Transverse colon (tissue), 4 donors: ENCODE measurements at regions of chr16 and their contacts with region 1.

Region 1: DNA sequence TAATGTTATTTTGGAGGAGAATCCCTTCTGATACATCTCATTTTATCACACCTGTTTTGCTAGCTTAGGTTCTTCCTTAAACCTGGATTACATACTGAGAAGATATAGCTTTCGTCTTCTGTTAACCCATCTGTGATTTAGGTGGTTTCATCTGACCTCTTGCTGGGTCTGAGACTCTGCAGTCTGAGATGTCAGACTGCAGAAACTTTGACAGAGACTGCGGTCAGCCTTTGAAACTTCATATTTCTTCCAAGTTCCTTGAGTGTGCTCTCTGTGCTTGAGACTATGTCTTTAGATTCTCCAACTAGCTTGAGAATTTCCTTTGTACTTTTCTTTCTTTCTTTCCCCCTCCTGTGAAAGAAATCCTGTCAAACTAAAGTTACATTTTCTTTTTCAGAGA is 196.4 kb upstream of the MPHOSPH6 start:
- DNase-seq: no peak
- H3K4me3 ChIP-seq: no peak overlapping the region
- H3K27ac ChIP-seq: no peak overlapping the region
- H3K4me1 ChIP-seq: no peaks in the 10 kb centered on the region
- H3K27me3 ChIP-seq: no peaks in the 10 kb centered on the region
- CTCF ChIP-seq: no peak
- EP300 ChIP-seq: no peak
- POLR2A ChIP-seq: no peak

Region 2: DNA sequence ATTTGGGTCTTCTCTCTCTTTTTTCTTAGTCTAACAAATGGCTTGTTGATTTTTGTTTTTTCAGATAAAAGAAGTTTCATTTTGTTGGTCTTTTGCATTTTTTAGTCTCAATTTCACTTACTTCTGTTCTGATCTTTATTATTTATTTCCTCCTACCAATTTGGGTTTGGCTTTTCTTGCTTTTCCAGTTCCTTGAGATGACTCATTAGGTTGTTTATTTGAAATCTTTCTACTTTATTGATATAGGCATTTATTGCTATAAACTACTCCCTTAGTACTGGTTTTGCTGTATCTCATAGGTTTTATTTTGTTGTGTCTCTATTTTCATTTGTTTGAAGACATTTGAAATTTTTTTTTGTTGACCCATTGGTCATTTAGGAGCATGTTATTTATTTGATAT is 44.3 kb before region 1 on chr16:
- in situ Hi-C with region 1: no loop called
- intact Hi-C with region 1: no loop called
- DNase-seq: no peak
- H3K4me3 ChIP-seq: no peak overlapping the region
- H3K27ac ChIP-seq: no peak overlapping the region
- H3K4me1 ChIP-seq: no peaks in the 10 kb centered on the region
- H3K27me3 ChIP-seq: no peaks in the 10 kb centered on the region
- CTCF ChIP-seq: no peak
- EP300 ChIP-seq: no peak
- POLR2A ChIP-seq: no peak

Region 3: DNA sequence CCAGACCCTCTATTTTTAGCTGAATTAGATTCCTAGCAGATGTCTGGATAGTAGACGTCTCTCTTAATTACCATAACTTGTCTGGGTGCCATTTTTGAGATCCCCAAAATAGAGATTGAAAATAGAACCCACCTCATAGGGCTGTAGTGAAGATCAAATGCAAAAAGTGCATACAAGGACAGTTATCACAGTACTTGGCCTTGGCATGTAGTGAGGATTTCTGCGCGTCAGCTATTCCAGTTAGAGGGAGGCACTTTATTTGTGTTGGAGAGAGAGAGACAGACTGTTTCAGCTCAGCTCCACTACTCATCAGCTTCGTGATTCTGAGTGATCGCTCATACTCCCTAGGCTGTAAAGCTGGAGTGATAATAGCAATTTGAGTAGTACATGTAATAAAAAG is 200.7 kb after region 1 on chr16:
- in situ Hi-C with region 1: no loop called
- intact Hi-C with region 1: loop called (anchors 2 kb)
- DNase-seq: no peak
- H3K4me3 ChIP-seq: no peak overlapping the region
- H3K27ac ChIP-seq: no peak overlapping the region
- H3K4me1 ChIP-seq: no peaks in the 10 kb centered on the region
- H3K27me3 ChIP-seq: no peaks in the 10 kb centered on the region
- CTCF ChIP-seq: no peak
- EP300 ChIP-seq: no peak
- POLR2A ChIP-seq: no peak

Region 4: DNA sequence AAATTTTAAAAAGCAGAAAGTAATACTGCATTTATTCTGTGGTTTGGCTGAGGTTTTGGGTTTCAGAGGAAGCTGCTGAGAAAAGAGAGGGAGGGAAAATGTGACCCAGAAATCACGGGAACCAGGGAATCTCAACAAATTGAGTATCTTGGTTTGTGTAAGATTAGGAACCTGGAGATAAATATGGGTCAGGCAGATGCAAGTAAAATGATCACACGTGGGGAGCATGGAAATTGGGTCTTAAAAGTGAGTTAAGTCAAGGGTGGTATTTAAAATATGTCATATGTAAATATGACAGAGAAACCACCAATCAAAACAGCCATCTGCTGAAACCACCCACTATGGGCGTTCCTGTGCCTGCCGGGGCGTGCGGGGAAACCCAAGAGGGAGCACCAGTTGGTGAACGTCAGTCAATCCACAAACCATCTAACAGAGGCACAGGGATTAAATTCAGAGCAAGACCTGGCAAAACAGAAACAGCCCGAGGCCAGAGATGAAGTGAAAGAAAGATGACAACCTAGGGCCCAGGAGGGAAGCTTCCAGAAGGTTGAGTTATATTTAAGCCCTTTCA is 293.7 kb after region 1 on chr16:
- in situ Hi-C with region 1: no loop called
- intact Hi-C with region 1: no loop called
- DNase-seq: no peak
- H3K4me3 ChIP-seq: no peak overlapping the region
- H3K27ac ChIP-seq: no peak overlapping the region
- H3K4me1 ChIP-seq: no peaks in the 10 kb centered on the region
- H3K27me3 ChIP-seq: no peaks in the 10 kb centered on the region
- CTCF ChIP-seq: no peak
- EP300 ChIP-seq: no peak
- POLR2A ChIP-seq: no peak